Posterior cingulate gyrus (tissue), 11 donors: ENCODE measurements at regions of chr16 and their contacts with region 1.

Region 1: GRCh38 chr16:30874821-30875717 is 18.8 kb downstream of the BCL7C start:
- DNase-seq: peak; percentile 83 to 99 (median 91)

Region 2: GRCh38 chr16:30805370-30806169 is 69.5 kb before region 1 on chr16:
- intact Hi-C with region 1: loop called (anchors 1 kb)
- DNase-seq: peak; percentile 77 to 98 (median 88)